Gastrocnemius medialis (tissue), 4 donors: ENCODE measurements at regions of chr16 and their contacts with region 1.

Region 1: DNA sequence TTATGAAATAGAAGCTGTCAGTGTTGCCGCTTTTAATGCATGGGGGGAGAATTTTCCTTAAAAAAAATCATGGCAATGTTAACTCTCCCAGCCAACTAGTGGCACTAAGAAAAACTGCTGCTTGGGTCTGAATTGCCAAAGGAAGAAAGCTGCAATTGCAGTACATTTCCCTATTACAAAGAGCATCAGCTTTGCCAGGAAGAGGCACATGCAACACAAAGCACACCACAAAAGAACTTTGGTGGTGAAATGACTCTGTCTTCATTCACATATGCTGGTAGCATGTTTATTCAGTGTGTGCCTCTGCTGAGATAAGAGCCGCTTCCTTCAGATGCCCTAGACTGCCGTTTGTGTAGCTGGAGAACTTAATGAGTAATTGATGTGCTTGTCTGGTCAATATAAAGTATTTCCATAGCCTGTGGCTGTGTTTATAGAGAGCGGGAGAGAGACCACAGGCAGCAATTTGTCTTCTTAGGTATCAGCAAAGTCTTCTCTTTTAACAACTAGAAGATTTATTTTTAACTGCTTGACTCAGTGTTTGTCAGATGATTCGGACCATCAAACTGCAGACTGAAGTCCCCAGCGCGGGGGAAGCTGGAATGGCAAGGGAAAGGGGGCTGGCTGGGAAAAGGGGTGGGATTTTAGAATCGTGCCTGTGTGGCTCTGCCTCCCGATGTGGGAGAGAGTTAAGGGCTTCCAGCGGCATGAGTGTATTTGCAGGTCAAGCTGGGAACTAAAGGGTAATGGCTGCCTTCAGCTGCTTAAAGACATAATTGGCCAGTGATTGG is 115.1 kb downstream of the MRTFB start:
- DNase-seq: peak; percentile 7 to 32
- ATAC-seq: peak; percentile 71 to 73
- H3K4me3 ChIP-seq: peak overlapping the region; percentile 57 to 65 (median 62)
- H3K27ac ChIP-seq: peak overlapping the region; percentile 87 to 92 (median 90)
- H3K4me1 ChIP-seq: peaks cover 45 to 62% of the 10 kb centered on the region in 2 donors
- H3K27me3 ChIP-seq: no peaks in the 10 kb centered on the region
- CTCF ChIP-seq: peak; percentile 47 to 66 (median 59)
- POLR2A ChIP-seq: peak; percentile 37 to 72

Region 2: GRCh38 chr16:14003074-14003570 is 183.1 kb before region 1 on chr16:
- in situ Hi-C with region 1: no loop called
- intact Hi-C with region 1: loop called (anchors 5 kb)
- DNase-seq: peak in 1 of 2 donors; percentile 48
- ATAC-seq: peak; percentile 59 to 60
- H3K4me3 ChIP-seq: peak overlapping the region; percentile 45 to 56 (median 46)
- H3K27ac ChIP-seq: peak overlapping the region; percentile 41 to 76 (median 72)
- H3K4me1 ChIP-seq: peaks cover 41 to 59% of the 10 kb centered on the region in 2 donors
- H3K27me3 ChIP-seq: no peaks in the 10 kb centered on the region
- CTCF ChIP-seq: peak in 2 of 5 experiments; percentile 31 to 69
- POLR2A ChIP-seq: no peak

Region 3: DNA sequence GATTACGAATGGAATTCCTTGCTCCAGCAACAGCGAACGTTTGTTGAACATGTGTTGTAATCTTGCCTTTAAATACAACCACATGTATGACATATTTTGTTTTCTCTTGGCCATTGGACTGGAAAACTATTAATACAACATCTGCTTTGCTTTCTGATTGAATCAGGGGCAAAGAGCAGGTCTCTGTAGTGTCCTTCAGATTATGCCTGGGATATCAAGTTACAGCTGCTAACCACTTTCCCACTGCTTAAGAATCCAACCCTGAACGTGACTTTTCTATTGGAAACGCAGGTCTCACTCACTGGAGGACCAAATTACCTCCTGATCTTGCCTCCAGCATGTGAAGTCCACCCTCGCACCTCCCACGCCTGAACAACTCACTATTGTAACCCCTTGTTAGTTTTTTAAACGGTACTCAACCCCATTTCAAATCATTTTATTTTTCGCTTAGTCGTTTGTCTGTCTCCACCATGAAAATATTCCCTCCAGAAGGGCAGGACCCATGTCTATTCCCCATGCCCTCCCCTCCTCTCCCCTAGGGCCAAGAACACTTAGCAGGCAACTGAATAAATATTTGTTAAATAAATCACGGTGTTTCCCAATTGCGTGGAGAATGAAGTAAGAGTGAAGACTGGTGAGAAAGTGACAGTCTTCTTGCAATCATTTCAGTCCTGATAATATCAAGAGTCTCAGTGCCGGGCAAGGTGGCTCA is 172.5 kb before region 1 on chr16:
- in situ Hi-C with region 1: no loop called
- intact Hi-C with region 1: loop called (anchors 1 kb)
- DNase-seq: peak; percentile 25 to 38
- ATAC-seq: peak; percentile 69 to 80
- H3K4me3 ChIP-seq: peak overlapping the region; percentile 26 to 47 (median 41)
- H3K27ac ChIP-seq: peak overlapping the region; percentile 70 to 79 (median 77)
- H3K4me1 ChIP-seq: peaks cover 44 to 46% of the 10 kb centered on the region in 2 donors
- H3K27me3 ChIP-seq: no peaks in the 10 kb centered on the region
- CTCF ChIP-seq: no peak
- POLR2A ChIP-seq: no peak

Region 4: DNA sequence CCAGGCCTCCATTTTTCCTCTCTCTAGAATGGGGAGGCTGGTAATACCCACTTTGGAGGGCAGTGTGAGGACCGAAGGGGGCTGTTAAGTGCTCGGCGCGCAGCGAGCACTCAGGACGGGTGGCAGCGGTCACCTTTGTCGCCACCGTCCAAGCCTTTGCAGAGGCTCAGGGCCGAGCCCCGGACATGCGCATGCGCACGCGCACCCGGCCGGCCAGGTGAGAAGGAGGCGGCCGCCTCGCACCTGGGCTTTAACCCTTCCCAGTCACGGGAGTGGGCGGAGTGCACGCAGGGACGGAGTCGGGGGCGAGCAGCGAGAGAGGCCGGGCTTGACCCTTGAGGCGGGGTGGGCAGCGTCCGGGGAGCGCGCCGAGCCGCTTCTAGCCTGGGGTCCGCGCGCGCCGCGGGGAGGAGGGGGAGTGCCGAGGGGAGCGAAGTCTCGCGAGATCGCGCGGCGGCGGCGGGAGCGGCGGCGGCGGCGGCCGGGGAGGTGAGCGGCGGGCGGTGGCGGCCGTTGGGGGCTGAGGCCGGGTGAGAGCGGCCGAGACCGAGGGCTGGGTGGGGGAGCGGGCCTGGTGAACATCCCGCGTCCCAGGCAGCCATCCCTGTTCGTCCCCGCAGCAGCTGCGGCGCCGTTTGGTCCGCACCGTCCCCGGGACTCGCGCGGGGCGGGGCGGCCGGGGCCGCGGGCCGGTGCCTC is 115.2 kb before region 1 on chr16 and contains the start of gene MRTFB:
- in situ Hi-C with region 1: no loop called
- intact Hi-C with region 1: loop called (anchors 5 kb)
- DNase-seq: peak; percentile 41 to 63
- ATAC-seq: peak; percentile 90 to 94
- H3K4me3 ChIP-seq: peak within 1 kb of the TSS; percentile 75 to 96 (median 89)
- H3K27ac ChIP-seq: peak within 1 kb of the TSS; percentile 76 to 91 (median 86)
- H3K4me1 ChIP-seq: peaks cover 10 to 20% of the 10 kb centered on the region in 2 donors
- H3K27me3 ChIP-seq: no peaks in the 10 kb centered on the region
- CTCF ChIP-seq: no peak
- POLR2A ChIP-seq: peak; percentile 67 to 80
- total RNA-seq, gene MRTFB: 12.7 to 20.4 (median 14.8) TPM

Region 5: DNA sequence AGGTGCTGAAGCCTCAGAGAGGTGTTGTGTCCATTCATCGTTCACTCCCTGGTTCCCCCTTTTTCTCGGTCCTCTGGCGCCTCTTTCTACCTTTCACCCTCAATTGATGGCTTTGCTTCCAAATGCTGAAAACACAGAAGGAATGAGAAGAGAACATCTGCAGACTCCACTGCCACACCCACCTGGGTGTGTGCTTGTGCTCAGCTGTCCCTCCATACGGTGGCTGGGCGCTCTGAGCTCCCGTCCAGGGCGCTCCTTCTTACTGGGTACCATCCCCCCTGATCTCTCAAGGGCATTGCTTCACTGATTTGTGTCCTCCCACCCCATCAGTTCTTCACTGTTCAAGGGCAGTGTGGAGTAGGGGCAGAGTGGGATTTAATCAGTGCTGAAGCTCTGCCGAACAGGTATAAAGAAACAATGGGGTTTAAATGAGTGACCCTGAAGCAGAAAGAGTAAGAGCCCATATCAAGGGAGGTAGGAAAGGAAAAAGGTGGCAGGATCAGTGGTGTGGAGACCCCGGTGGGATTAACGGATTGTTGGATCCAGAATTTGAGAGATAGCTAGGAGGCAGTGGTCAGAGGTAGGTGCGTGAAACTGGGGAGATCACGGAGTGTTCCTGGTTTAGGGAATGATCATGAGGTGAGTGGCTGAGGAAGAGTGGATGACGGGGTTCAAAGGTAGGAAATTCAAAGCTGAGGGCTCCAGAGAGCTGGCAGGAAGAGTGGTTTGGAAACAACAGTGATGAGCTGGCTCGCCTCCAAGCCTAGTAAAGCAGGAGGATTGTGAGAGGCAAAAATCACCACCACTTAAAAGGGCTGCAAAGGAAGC is 74.3 kb before region 1 on chr16:
- in situ Hi-C with region 1: no loop called
- intact Hi-C with region 1: loop called (anchors 5 kb)
- DNase-seq: peak in 1 of 2 donors; percentile 46
- ATAC-seq: peak in 1 of 2 donors; percentile 13
- H3K4me3 ChIP-seq: no peak overlapping the region
- H3K27ac ChIP-seq: peak overlapping the region; percentile 80 to 88 (median 84)
- H3K4me1 ChIP-seq: peaks cover 87 to 90% of the 10 kb centered on the region in 2 donors
- H3K27me3 ChIP-seq: no peaks in the 10 kb centered on the region
- CTCF ChIP-seq: no peak
- POLR2A ChIP-seq: no peak